Activated T-helper 2 cell treated with anti-CD3 and anti-CD28 coated beads, Interferon-gamma antibody, Interleukin-2, Interleukin-4, amounts not matched to agents 10 μg/mL and 5 μg/mL and 100 μg/mL, durations not matched to agents 14 hours and 24 hours and 36 hours (primary cell): ENCODE measurements at regions of chr1 and their contacts with region 1.

Region 1: GRCh38 chr1:1919304-1920056 is 401 bp upstream of the TMEM52 start:
- DNase-seq: peak; percentile 99
- H3K4me3 Mint-ChIP-seq: peak overlapping the region; percentile 56
- H3K27ac Mint-ChIP-seq: no peak overlapping the region
- H3K4me1 Mint-ChIP-seq: peaks cover 2% of the 10 kb centered on the region
- H3K27me3 Mint-ChIP-seq: peaks cover 1% of the 10 kb centered on the region

Region 2: DNA sequence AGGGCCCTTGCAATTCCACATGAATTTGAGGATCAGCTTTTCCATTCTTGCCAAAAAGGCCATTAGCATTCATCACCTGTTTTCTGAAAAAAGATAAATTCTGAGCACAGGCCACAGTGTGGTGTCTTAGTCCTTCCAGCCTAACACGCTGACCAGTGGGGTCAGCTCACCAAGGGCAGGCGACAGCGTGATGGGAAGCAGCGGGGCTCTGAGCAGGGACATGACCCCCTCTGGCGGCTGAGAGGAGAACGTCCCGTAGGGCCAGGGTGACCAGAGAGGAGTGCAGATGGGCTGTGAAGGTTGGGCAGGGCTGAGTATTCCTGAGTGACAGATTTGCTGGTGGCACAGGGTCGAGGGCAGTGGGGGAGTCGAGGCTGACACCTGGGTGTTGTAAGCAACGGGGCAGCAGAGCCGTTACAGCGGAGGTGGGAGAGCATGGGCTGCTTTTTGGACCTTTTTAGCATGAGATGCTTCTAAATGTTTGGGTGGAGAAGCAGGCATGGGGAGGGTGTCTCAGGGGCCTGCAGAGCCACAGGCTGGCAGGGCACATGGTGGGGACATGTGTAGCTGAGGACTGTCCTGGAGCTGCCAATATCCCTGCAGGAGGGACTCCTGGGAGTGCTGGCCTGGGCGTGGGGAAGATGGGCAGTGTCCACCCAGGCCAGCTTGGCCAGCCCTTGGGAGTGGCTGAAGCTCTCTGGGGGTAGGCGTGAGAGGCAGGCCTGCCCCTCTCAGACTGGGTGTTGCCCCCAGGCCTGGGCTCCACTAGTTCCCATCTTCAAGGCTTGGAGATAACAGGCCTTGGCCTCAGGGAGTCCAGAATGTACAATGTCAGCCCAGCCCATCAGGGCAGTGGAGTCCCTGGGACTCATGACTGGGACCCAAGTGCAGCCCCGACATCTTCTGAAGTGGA is 13.0 kb before region 1 on chr1:
- intact Hi-C with region 1: loop called (anchors 1 kb)
- DNase-seq: peak; percentile 67
- H3K4me3 Mint-ChIP-seq: peak overlapping the region; percentile 55
- H3K27ac Mint-ChIP-seq: peak overlapping the region; percentile 43
- H3K4me1 Mint-ChIP-seq: peaks cover 7% of the 10 kb centered on the region
- H3K27me3 Mint-ChIP-seq: no peaks in the 10 kb centered on the region

Region 3: DNA sequence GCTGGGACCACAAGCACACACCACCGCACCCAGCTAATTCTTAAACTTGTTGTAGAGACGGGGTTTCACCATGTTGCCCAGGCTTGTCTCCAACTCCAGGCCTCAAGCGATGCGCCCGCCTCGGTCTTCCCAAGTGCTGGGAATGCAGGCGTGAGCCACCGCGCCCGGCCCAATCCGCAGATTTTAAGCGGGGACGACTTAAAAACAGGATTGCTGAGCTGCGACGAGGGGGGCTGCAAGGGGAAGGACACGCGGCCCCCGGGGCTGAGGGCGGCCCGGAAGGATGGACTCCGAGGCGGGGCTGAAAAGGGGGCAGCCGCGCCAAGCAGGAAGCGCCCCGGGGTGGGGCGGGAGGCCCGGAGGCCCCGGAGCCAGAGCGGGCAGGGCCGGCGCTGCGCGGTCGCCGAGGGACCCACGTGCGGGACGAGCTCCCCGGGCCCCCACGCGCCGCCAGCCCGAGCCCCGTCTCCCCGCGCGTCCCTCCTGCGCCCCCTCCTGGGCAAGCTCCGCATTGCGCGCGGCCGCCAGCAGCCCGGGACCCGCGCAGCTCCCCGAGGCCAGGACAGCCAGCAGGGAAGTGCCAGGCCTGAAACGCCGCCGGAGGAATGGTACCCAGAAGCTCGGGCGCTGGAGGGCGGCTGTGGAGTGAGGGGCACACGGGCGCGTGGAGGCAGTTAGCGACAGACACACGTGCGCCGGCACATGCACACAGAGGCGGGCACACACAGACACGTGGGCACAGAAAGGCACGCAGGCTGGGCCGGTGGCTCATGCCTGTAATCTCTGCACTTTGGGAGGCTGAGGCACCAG is 125.2 kb after region 1 on chr1:
- intact Hi-C with region 1: no loop called
- DNase-seq: peak; percentile 61
- H3K4me3 Mint-ChIP-seq: no peak overlapping the region
- H3K27ac Mint-ChIP-seq: no peak overlapping the region
- H3K4me1 Mint-ChIP-seq: peaks cover 10% of the 10 kb centered on the region
- H3K27me3 Mint-ChIP-seq: peaks cover 29% of the 10 kb centered on the region

Region 4: DNA sequence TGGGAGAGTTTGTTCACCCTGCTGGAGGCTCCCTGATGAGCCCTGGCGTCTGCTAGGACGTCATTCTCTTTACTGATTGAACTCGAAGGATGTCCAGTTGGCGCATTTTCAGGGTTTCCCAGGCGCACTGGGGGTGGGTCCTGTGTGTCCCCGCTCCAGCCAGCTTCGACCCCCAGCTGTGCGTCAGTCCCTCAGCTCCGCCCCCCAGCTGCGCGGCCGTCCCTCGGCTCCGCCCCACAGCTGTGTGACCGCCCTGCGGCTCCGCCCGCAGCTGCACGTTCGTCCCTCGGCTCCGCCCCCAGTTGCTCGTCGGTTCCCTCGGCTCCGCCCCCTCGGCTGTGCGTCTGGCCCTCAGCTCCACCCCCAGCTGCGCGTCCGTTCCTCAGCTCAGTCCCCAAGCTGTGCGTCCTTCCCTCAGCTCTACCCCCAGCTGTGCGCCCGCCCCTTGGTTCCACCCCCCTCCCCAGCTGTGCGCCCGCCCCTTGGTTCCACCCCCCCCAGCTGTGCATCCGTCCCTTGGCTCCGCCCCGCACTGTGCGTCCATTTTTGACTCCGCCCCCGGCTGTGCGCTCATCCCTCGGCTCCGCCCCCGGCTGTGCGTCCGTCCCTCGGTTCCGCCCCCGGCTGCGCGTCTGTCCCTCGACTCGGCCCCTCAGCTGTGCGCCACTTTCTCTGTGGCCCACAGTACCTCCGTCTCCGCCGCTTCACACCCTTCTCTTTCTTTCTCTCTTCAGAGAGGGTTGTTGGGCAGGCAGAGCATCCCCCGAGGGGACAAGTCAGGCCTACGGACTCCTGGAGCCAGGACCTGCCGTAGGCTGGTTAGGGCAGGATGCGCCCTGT is 213.8 kb after region 1 on chr1:
- intact Hi-C with region 1: loop called (anchors 10 kb)
- DNase-seq: peak; percentile 96
- H3K4me3 Mint-ChIP-seq: peak overlapping the region; percentile 76
- H3K27ac Mint-ChIP-seq: peak overlapping the region; percentile 52
- H3K4me1 Mint-ChIP-seq: peaks cover 8% of the 10 kb centered on the region
- H3K27me3 Mint-ChIP-seq: no peaks in the 10 kb centered on the region